CD14-positive monocyte (primary cell): ENCODE measurements at regions of chr13 and their contacts with region 1.

Region 1: DNA sequence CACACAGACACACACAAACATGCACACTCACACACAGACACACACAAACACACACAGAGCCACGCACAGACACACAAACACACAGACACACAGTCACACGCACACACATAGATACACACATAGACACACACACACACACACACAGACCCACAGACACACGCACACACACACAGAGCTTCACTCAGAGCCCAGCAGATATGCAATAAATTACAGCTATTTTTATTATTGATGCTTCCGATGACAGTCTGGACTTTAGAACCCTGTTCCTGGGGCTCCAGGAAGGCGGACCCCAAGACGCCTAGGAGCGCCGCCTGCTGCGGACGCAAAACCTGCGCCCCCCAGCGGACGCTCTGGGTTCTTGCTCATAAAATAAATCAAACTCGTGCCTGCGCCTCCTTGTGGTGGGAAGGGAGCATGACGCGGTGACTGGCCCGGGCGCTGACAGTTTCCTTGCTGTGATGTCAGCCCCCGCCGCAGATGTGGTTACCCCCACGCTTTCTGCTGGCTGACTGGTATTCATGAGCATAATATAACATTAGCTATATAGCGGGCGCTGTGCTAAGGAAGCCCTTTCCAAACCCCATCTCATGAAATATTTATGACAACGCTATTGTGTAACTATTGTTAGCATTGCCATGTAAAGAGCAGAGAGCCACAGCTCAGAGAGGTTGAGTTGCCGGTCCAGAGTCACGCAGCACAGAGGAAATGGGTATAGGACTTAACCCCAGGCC is 64.4 kb upstream of the TM9SF2 start:
- DNase-seq: peak; percentile 85 to 92 (median 88)
- H3K4me3 ChIP-seq: peak overlapping the region in 1 of 3 experiments; percentile 55
- H3K4me3 Mint-ChIP-seq: peak overlapping the region; percentile 70 to 85
- H3K27ac ChIP-seq: peak overlapping the region in 1 of 2 donors; percentile 59
- H3K27ac Mint-ChIP-seq: peak overlapping the region; percentile 5 to 85 (median 76)
- H3K4me1 ChIP-seq: peaks cover 36 to 37% of the 10 kb centered on the region in 2 donors
- H3K4me1 Mint-ChIP-seq: peaks cover 37% of the 10 kb centered on the region
- H3K27me3 ChIP-seq: peaks cover 0 to 12% of the 10 kb centered on the region in 2 donors
- H3K27me3 Mint-ChIP-seq: peaks cover 15 to 17% (median 16%) of the 10 kb centered on the region in 3 donors
- CTCF ChIP-seq: peak; percentile 100

Region 2: DNA sequence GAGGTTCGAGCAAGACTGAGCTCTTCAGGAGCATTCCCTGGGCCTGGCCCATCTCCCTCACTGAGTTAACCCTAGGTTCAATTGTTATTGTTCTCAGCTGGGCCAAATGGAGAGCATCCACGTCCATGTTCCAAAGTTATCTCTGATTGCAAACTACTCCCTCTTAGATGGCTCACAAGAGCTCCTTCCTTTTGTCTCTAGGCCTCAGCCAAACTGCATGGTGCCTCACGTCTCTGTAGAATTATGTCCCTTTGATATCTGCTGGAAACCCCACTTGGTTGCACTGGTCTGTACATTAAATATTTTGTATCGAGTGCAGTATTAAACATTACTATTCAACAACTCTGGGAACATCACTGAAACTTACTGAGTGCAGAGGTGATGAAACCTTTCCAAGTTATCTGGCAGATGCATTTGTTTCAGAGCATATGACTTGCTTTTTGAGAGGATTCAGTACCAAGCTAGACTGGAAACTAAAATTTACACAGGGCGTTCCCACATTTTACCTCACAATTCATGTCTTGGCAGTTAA is 497.1 kb before region 1 on chr13:
- intact Hi-C with region 1: no loop called
- DNase-seq: no peak
- H3K4me3 ChIP-seq: no peak overlapping the region
- H3K4me3 Mint-ChIP-seq: no peak overlapping the region
- H3K27ac ChIP-seq: no peak overlapping the region
- H3K27ac Mint-ChIP-seq: no peak overlapping the region
- H3K4me1 ChIP-seq: no peaks in the 10 kb centered on the region
- H3K4me1 Mint-ChIP-seq: peaks cover 3% of the 10 kb centered on the region
- H3K27me3 ChIP-seq: peaks cover 0 to 3% of the 10 kb centered on the region in 2 donors
- H3K27me3 Mint-ChIP-seq: peaks cover 2 to 10% (median 8%) of the 10 kb centered on the region in 3 donors
- CTCF ChIP-seq: no peak

Region 3: GRCh38 chr13:99176309-99177276 is 260.3 kb before region 1 on chr13:
- intact Hi-C with region 1: loop called in 1 of 2 experiments (anchors 5 kb)
- DNase-seq: peak; percentile 58 to 72 (median 67)
- H3K4me3 ChIP-seq: no peak overlapping the region
- H3K4me3 Mint-ChIP-seq: peak overlapping the region; percentile 61 to 62
- H3K27ac ChIP-seq: no peak overlapping the region
- H3K27ac Mint-ChIP-seq: peak overlapping the region in 2 of 7 donors; percentile 13 to 48
- H3K4me1 ChIP-seq: peaks cover 33 to 37% of the 10 kb centered on the region in 2 donors
- H3K4me1 Mint-ChIP-seq: peaks cover 48% of the 10 kb centered on the region
- H3K27me3 ChIP-seq: peaks cover 23 to 42% of the 10 kb centered on the region in 2 donors
- H3K27me3 Mint-ChIP-seq: peaks cover 46 to 49% (median 48%) of the 10 kb centered on the region in 3 donors
- CTCF ChIP-seq: peak; percentile 99

Region 4: DNA sequence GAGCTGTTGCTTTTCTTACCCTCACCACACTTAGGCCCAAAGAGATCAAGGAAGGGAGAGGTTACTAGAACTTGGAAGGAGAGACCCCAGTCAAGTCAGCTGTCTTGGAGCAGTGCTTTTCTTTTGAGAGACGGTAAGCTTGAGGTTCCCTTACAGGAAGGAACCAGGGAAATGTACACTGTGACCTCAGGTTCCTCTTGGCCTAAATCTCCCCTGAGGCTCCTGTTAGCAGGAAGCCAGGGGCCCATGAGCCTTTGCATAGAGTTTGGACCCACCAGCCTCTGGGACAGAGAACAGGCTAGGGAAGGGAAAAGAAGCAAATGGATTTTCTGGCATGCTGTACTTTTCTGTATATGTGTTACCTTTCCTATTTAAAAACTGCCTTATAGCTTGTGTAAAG is 172.8 kb before region 1 on chr13:
- intact Hi-C with region 1: loop called (anchors 5 kb)
- DNase-seq: peak in 2 of 3 donors; percentile 33 to 44
- H3K4me3 ChIP-seq: no peak overlapping the region
- H3K4me3 Mint-ChIP-seq: no peak overlapping the region
- H3K27ac ChIP-seq: peak overlapping the region; percentile 9 to 52
- H3K27ac Mint-ChIP-seq: peak overlapping the region in 5 of 7 donors; percentile 13 to 87 (median 76)
- H3K4me1 ChIP-seq: peaks cover 31 to 49% of the 10 kb centered on the region in 2 donors
- H3K4me1 Mint-ChIP-seq: peaks cover 55% of the 10 kb centered on the region
- H3K27me3 ChIP-seq: no peaks in the 10 kb centered on the region
- H3K27me3 Mint-ChIP-seq: no peaks in the 10 kb centered on the region
- CTCF ChIP-seq: no peak

Region 5: GRCh38 chr13:99269627-99270241 is 167.1 kb before region 1 on chr13:
- intact Hi-C with region 1: loop called (anchors 5 kb)
- DNase-seq: peak; percentile 76 to 90 (median 77)
- H3K4me3 ChIP-seq: no peak overlapping the region
- H3K4me3 Mint-ChIP-seq: no peak overlapping the region
- H3K27ac ChIP-seq: peak overlapping the region; percentile 26 to 90
- H3K27ac Mint-ChIP-seq: peak overlapping the region; percentile 96 to 98 (median 97)
- H3K4me1 ChIP-seq: peaks cover 21 to 30% of the 10 kb centered on the region in 2 donors
- H3K4me1 Mint-ChIP-seq: peaks cover 39% of the 10 kb centered on the region
- H3K27me3 ChIP-seq: no peaks in the 10 kb centered on the region
- H3K27me3 Mint-ChIP-seq: peaks cover 0 to 4% (median 0%) of the 10 kb centered on the region in 3 donors
- CTCF ChIP-seq: peak; percentile 84

Region 6: DNA sequence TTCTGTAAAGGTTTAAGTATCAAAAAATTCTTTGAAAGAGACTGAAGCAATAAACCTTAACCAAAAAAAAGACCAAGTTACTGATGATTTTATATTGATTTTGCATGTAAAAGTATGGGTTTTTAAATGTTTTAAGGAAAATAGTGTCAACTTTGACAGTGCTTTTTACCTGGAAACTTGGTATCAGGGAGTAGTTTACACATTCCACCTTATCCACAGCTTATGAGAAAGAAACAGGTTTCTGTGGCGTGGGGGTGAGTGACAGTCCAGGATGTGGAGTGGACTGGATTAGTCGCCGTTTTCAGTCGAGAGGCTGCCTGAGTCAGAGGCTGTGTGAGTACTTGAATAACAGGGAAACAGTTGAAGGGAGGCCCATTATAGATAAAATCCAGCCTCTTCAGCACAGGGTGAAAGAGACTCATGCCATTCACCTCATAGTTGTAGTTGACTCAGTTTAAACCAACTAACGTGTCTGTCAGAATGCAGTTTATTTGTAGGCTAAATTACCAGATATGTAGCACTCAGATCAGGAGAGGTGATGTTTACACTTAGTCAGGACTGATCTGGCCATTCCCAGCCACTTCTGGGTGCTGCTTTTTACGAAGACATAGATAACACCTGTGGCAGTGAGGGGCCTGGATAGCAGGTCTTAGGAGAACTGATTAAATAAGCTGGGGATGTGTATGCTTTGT is 129.1 kb before region 1 on chr13:
- intact Hi-C with region 1: loop called in 1 of 2 experiments (anchors 5 kb)
- DNase-seq: peak; percentile 79 to 90 (median 83)
- H3K4me3 ChIP-seq: no peak overlapping the region
- H3K4me3 Mint-ChIP-seq: peak overlapping the region in 1 of 2 donors; percentile 91
- H3K27ac ChIP-seq: peak overlapping the region; percentile 41 to 99
- H3K27ac Mint-ChIP-seq: peak overlapping the region; percentile 80 to 99 (median 97)
- H3K4me1 ChIP-seq: peaks cover 77 to 88% of the 10 kb centered on the region in 2 donors
- H3K4me1 Mint-ChIP-seq: peaks cover 79% of the 10 kb centered on the region
- H3K27me3 ChIP-seq: no peaks in the 10 kb centered on the region
- H3K27me3 Mint-ChIP-seq: peaks cover 0 to 1% (median 0%) of the 10 kb centered on the region in 3 donors
- CTCF ChIP-seq: no peak

Region 7: GRCh38 chr13:99386911-99387788 is 49.7 kb before region 1 on chr13:
- intact Hi-C with region 1: loop called (anchors 2 to 5 kb)
- DNase-seq: peak; percentile 74 to 79 (median 77)
- H3K4me3 ChIP-seq: no peak overlapping the region
- H3K4me3 Mint-ChIP-seq: no peak overlapping the region
- H3K27ac ChIP-seq: peak overlapping the region in 1 of 2 donors; percentile 28
- H3K27ac Mint-ChIP-seq: peak overlapping the region; percentile 43 to 87 (median 81)
- H3K4me1 ChIP-seq: peaks cover 6 to 9% of the 10 kb centered on the region in 2 donors
- H3K4me1 Mint-ChIP-seq: peaks cover 23% of the 10 kb centered on the region
- H3K27me3 ChIP-seq: no peaks in the 10 kb centered on the region
- H3K27me3 Mint-ChIP-seq: peaks cover 2 to 5% (median 3%) of the 10 kb centered on the region in 3 donors
- CTCF ChIP-seq: peak; percentile 91

Region 8: DNA sequence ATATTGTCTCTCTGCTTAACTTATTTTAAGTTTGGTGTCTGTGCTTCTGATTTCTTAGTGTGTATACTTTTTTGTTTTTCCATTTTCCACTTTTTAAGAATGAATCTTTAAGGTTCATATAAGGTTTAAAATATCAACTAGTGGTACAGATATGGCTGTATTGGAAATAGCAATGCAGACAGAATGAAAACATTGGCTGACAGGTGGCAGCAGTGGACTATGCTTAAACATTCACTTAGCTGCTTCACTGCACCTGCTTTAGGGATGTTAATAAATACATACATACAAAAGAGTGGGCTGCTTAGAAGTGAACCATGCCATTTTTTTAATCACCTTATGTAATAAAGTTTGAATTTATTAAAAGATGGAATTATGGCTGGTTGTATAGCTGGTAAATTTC is 91.7 kb after region 1 on chr13:
- intact Hi-C with region 1: no loop called
- DNase-seq: no peak
- H3K4me3 ChIP-seq: no peak overlapping the region
- H3K4me3 Mint-ChIP-seq: no peak overlapping the region
- H3K27ac ChIP-seq: no peak overlapping the region
- H3K27ac Mint-ChIP-seq: no peak overlapping the region
- H3K4me1 ChIP-seq: no peaks in the 10 kb centered on the region
- H3K4me1 Mint-ChIP-seq: peaks cover 3% of the 10 kb centered on the region
- H3K27me3 ChIP-seq: no peaks in the 10 kb centered on the region
- H3K27me3 Mint-ChIP-seq: no peaks in the 10 kb centered on the region
- CTCF ChIP-seq: no peak

Region 9: DNA sequence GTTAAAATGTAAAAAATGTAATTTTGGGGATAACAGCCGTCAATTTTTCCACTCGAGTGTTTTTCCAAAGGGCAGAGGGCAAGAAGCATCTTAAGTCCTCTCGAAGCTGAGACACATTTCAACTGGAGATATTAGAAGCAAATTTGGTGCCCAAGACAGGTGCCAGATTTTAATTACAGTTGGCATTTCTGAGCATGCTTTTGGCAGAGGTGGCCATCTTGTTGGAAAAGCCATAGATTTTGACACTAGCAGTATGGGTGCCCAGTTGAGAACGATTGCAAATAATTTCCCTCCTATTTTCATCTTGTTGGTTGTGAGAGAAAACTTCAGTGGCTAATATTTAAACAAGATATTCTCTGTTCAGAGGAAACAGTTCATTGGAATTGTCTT is 210.7 kb after region 1 on chr13:
- intact Hi-C with region 1: no loop called
- DNase-seq: no peak
- H3K4me3 ChIP-seq: no peak overlapping the region
- H3K4me3 Mint-ChIP-seq: no peak overlapping the region
- H3K27ac ChIP-seq: no peak overlapping the region
- H3K27ac Mint-ChIP-seq: no peak overlapping the region
- H3K4me1 ChIP-seq: no peaks in the 10 kb centered on the region
- H3K4me1 Mint-ChIP-seq: no peaks in the 10 kb centered on the region
- H3K27me3 ChIP-seq: no peaks in the 10 kb centered on the region
- H3K27me3 Mint-ChIP-seq: peaks cover 3 to 8% (median 4%) of the 10 kb centered on the region in 3 donors
- CTCF ChIP-seq: no peak